ENCODE measurements at regions of chr3 and their contacts with region 1.

Region 1: GRCh38 chr3:177597311-177598096 is 400.2 kb upstream of the TBL1XR1 start:
- DNase-seq: peak; percentile 46
- H3K4me3 ChIP-seq: no peak overlapping the region
- H3K27ac ChIP-seq: peak overlapping the region; percentile 71 to 84
- H3K4me1 ChIP-seq: peaks cover 12% of the 10 kb centered on the region
- H3K27me3 ChIP-seq: no peaks in the 10 kb centered on the region
- CTCF ChIP-seq: no peak
- POLR2A ChIP-seq: no peak

Region 2: DNA sequence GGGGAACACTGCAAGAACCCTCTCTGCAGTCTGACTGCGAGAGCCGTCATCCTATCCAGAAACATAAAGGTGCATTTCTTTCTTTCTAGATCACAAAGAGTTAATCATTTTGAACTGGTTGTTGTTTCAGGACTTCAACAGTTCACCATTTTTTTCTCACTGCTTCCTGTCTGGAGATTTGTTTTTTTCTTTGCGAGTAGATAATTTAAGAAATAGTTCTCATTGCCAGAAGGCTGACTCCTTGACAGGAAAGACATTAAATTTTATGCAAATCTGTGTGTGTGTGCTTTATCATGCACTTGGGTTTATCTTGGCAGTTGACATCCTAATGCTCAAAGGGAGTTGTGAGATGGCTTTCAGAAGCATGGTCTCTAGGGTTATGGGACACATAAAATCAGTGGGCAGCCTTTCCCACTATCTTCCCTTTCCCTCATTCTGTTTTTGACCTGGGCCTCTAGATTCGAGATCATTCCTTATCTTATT is 276.7 kb before region 1 on chr3:
- intact Hi-C with region 1: no loop called
- DNase-seq: no peak
- H3K4me3 ChIP-seq: no peak overlapping the region
- H3K27ac ChIP-seq: peak overlapping the region in 1 of 2 donors; percentile 24
- H3K4me1 ChIP-seq: no peaks in the 10 kb centered on the region
- H3K27me3 ChIP-seq: no peaks in the 10 kb centered on the region
- CTCF ChIP-seq: no peak
- POLR2A ChIP-seq: no peak

Region 3: DNA sequence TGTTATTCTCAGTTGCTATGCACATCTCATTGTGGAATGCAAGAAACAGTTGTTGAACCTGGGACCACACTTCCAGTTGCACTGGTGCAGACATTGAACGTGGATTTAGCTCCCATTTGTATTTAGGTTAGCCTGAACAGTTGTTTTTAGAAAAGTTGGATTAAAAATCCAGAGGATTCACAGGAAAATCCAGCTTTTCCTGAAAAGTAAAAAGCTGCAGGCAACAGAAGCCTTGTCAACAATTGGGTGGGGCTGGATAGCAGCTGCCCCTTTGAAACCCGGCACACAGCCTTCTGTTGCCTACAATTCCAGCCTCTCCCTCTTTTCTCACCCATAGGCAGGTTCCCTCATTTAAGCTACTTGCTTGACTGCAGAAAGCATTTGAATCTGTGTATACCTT is 234.9 kb before region 1 on chr3:
- intact Hi-C with region 1: no loop called
- DNase-seq: no peak
- H3K4me3 ChIP-seq: no peak overlapping the region
- H3K27ac ChIP-seq: peak overlapping the region in 1 of 2 donors; percentile 88
- H3K4me1 ChIP-seq: peaks cover 23% of the 10 kb centered on the region
- H3K27me3 ChIP-seq: no peaks in the 10 kb centered on the region
- CTCF ChIP-seq: no peak
- POLR2A ChIP-seq: no peak

Region 4: DNA sequence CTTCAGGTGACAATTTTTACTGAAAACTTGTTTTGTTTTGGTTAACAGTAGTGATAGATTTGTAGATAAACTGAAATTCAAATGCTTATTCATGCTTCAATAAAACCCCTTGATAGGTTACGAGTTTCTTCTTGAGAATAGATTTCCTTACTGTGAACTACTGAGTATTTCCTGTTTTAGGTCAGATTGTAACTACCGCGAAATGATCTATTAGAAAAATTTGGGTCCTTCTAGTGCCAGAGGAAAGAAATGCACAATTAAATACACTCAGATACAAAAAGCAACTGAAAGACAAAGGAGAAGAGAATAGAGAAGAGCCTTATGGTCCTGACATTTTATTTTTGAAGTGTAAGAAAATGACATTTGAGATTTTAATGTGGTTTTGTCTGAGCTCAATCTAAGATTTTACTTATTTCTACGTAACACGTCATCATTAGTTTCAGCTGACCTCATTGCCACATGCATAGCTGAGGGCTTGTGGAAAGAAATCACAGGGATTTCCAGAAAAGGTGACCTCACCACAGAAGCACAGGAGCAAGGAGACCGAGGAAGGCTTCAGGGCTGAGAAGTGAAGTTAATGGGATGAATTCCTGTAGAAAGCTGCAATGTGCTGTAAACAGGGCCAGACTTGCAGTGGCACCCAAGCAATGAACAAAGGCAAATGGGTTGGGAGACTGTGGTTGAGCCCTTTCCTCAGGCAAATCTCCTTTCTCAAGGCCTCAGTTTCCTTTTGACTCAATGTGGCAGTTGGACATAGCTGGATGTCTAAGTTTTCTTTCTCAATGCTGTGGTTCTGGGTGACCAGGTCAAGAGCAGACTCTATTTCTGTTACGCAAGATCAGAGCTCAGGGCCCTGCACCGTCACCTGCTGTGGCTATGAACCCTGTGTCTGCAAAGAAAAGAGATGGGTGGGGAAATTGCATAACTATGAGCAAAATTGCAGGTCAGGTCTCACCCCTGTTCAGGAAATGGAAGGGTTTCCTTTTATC is 148.2 kb before region 1 on chr3:
- intact Hi-C with region 1: loop called (anchors 10 kb)
- DNase-seq: no peak
- H3K4me3 ChIP-seq: no peak overlapping the region
- H3K27ac ChIP-seq: no peak overlapping the region
- H3K4me1 ChIP-seq: peaks cover 8% of the 10 kb centered on the region
- H3K27me3 ChIP-seq: no peaks in the 10 kb centered on the region
- CTCF ChIP-seq: no peak
- POLR2A ChIP-seq: no peak

Region 5: GRCh38 chr3:177498037-177498856 is 99.3 kb before region 1 on chr3:
- intact Hi-C with region 1: no loop called
- DNase-seq: no peak
- H3K4me3 ChIP-seq: no peak overlapping the region
- H3K27ac ChIP-seq: no peak overlapping the region
- H3K4me1 ChIP-seq: no peaks in the 10 kb centered on the region
- H3K27me3 ChIP-seq: no peaks in the 10 kb centered on the region
- CTCF ChIP-seq: no peak
- POLR2A ChIP-seq: no peak

Measured in prostate gland (tissue), 2 donors.